ENCODE measurements at regions of chr5 and their contacts with region 1.

Region 1: GRCh38 chr5:154196955-154197652 is 6.6 kb downstream of the GALNT10 start:
- DNase-seq: peak; percentile 69
- H3K4me3 Mint-ChIP-seq: peak overlapping the region; percentile 79
- H3K27ac Mint-ChIP-seq: peak overlapping the region; percentile 92
- H3K4me1 Mint-ChIP-seq: peaks cover 77% of the 10 kb centered on the region
- H3K27me3 Mint-ChIP-seq: no peaks in the 10 kb centered on the region

Region 2: DNA sequence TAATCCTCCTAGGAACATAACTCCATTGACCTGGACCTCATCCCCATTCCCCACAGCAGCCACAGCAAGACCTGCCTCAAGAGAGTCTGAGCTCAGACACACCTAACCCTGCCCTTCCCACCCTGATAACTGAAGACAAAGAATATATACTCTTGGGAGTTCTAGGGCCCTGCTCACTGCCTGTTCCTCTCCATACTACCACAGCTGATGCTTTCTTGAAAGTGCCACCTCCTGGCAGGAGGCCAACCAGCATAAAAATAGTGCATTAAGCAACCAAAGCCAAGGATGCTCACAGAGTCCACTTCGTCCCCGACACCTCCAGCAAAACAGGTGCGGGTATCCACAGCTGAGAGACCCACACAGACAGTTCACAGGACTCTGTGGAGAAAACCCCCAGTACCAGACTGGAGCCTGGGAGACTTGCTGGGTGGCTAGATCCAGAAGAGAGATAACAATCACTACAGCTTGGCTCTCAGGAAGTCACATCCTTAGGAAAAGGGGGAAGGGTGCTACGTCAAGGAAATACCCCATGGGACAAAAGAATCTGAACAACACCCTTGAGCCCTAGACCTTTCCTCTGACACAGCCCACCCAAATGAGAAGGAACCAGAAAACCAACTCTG is 181.9 kb before region 1 on chr5:
- intact Hi-C with region 1: no loop called
- DNase-seq: no peak
- H3K4me3 Mint-ChIP-seq: no peak overlapping the region
- H3K27ac Mint-ChIP-seq: no peak overlapping the region
- H3K4me1 Mint-ChIP-seq: no peaks in the 10 kb centered on the region
- H3K27me3 Mint-ChIP-seq: no peaks in the 10 kb centered on the region

Region 3: GRCh38 chr5:154118893-154119336 is 78.2 kb before region 1 on chr5:
- intact Hi-C with region 1: no loop called
- DNase-seq: no peak
- H3K4me3 Mint-ChIP-seq: no peak overlapping the region
- H3K27ac Mint-ChIP-seq: no peak overlapping the region
- H3K4me1 Mint-ChIP-seq: no peaks in the 10 kb centered on the region
- H3K27me3 Mint-ChIP-seq: peaks cover 6% of the 10 kb centered on the region

Region 4: DNA sequence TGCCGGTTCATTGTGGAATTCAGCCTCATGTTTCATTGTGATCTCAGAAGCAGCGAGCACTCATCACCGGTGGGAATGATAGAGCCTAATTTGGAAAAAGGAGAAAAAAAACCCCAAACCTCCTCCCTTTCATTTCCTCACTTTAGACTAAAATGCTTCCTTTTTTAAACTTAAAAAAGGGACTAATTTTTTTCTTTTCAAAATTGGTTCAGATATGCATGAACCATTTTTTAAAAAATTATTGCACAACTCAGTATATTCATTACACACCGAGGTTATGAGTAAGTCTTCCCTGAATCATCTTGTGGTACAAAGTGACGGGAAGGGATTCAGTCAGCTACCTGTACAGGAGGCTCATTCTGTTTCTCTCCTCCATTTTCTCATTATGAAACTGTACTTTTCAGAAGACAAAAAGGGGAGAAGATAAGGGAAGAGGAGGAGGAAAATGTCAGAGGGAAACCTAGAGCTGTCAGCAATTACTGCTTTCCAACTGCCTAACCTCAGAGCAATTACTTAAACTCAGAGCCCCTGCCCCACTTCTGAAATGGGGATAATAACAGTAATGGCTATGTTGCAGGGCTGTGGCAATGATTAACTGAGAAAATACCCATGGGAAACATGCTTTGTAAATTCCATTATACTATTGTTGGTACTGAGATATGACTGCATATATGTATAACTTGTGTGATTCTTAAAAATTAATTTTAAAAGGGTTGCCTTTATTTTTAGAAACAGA is 17.4 kb after region 1 on chr5:
- intact Hi-C with region 1: loop called (anchors 1 kb)
- DNase-seq: no peak
- H3K4me3 Mint-ChIP-seq: peak overlapping the region; percentile 70
- H3K27ac Mint-ChIP-seq: peak overlapping the region; percentile 86
- H3K4me1 Mint-ChIP-seq: peaks cover 67% of the 10 kb centered on the region
- H3K27me3 Mint-ChIP-seq: no peaks in the 10 kb centered on the region

Region 5: GRCh38 chr5:154236536-154237375 is 39.7 kb after region 1 on chr5:
- intact Hi-C with region 1: loop called (anchors 2 kb)
- DNase-seq: peak; percentile 77
- H3K4me3 Mint-ChIP-seq: no peak overlapping the region
- H3K27ac Mint-ChIP-seq: peak overlapping the region; percentile 4
- H3K4me1 Mint-ChIP-seq: peaks cover 54% of the 10 kb centered on the region
- H3K27me3 Mint-ChIP-seq: no peaks in the 10 kb centered on the region

Region 6: DNA sequence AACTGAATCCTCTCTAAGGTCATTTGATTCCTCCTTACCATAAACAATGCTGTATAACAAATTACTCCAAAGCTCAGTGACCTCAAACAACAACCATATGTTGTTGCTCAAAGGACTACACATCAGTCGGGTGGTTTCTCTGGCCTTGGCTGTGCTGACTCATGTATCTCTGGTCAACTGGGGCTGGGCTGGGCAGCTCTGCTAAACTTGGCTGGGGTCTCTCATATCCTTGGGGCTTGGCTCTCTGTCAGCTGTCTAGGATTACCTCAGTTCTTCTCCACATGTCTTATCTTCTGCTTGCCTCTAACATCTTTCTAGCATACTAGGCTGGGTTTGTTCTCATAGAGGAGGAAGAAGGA is 79.8 kb after region 1 on chr5:
- intact Hi-C with region 1: loop called (anchors 2 kb)
- DNase-seq: no peak
- H3K4me3 Mint-ChIP-seq: no peak overlapping the region
- H3K27ac Mint-ChIP-seq: peak overlapping the region; percentile 23
- H3K4me1 Mint-ChIP-seq: peaks cover 56% of the 10 kb centered on the region
- H3K27me3 Mint-ChIP-seq: no peaks in the 10 kb centered on the region

Region 7: GRCh38 chr5:154311362-154311761 is 114.3 kb after region 1 on chr5:
- intact Hi-C with region 1: loop called (anchors 5 kb)
- DNase-seq: no peak
- H3K4me3 Mint-ChIP-seq: no peak overlapping the region
- H3K27ac Mint-ChIP-seq: peak overlapping the region; percentile 14
- H3K4me1 Mint-ChIP-seq: peaks cover 29% of the 10 kb centered on the region
- H3K27me3 Mint-ChIP-seq: no peaks in the 10 kb centered on the region

Measured in activated CD4-positive, alpha-beta T cell treated with anti-CD3 and anti-CD28 coated beads, Interleukin-2, amount 10 ng/mL, durations not matched to agents 24 days and 14 days (primary cell).